ENCODE measurements at regions of chr9 and their contacts with region 1.

Region 1: DNA sequence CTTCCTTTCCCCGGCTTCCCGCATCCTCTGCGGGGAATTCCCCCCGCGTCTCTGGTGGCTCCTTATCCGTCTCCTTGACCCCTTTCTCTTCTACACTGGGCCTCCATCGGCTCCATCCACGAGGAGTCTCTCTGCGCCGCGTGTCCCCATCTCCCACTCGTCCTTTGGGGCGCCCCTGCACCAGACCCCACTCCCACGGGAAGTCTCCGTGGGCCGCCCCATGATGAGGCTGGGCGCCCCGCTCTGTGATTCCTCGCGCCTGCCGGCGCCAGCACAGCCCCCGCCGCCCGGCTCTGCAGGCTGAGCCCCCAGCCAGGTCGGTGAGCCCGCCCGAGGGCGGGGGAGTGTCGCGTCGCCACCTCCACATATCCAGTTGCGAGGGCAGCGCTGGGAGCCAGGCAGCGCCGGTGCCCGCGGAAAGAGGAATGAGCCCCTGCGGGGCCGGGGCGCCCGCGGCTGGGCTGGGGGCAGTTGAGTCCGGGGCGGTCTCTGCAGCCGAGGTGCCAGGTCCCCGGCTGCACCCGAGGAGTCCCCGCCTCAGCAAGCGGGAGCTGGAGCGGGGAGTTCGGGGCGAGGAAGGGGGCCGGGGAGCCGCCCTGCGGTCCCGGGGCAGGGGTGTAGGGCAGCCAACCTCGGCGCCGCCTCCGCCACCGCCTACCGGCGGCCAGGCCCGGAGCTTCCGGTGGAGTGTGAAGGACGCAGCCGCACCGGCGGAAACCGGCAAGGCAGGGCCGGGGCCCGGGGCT is 2.1 kb upstream of the TRAF1 start:
- DNase-seq: peak; percentile 83
- ATAC-seq: peak; percentile 21
- H3K4me3 Mint-ChIP-seq: peak overlapping the region; percentile 88
- H3K27ac Mint-ChIP-seq: peak overlapping the region; percentile 100
- H3K4me1 Mint-ChIP-seq: peaks cover 53% of the 10 kb centered on the region
- H3K27me3 Mint-ChIP-seq: no peaks in the 10 kb centered on the region
- CTCF ChIP-seq: no peak

Region 2: DNA sequence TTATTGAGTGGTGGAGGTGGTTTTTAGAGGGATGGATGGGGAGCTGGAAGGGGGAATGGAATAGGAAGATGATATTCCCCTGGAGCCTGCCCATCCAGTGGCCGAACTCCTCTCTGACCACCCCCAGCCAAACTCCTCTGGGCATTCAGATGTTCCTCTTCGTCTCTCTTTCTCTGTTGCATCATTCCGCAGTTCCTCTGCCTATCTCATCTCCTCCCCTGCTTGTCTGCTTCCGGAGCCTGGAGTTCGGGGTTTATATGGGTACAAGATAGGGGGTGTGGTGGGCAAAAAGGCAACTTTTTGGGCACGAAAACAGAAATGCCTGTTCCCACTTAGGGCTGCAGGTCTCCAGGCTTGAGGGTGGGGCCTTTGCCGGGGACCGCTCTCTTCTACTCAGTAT is 336.4 kb before region 1 on chr9:
- CTCF ChIA-PET with region 1: no interaction called
- POLR2A ChIA-PET with region 1: no interaction called
- intact Hi-C with region 1: no loop called
- DNase-seq: no peak
- ATAC-seq: no peak
- H3K4me3 Mint-ChIP-seq: no peak overlapping the region
- H3K27ac Mint-ChIP-seq: no peak overlapping the region
- H3K4me1 Mint-ChIP-seq: no peaks in the 10 kb centered on the region
- H3K27me3 Mint-ChIP-seq: no peaks in the 10 kb centered on the region
- CTCF ChIP-seq: no peak

Region 3: GRCh38 chr9:120792898-120793765 is 135.5 kb before region 1 on chr9 and contains the start of gene FBXW2:
- CTCF ChIA-PET with region 1: interaction called, 3 read pairs
- POLR2A ChIA-PET with region 1: interaction called, 13 read pairs
- intact Hi-C with region 1: no loop called
- DNase-seq: peak; percentile 91
- ATAC-seq: peak; percentile 94
- H3K4me3 Mint-ChIP-seq: peak within 1 kb of the TSS; percentile 99
- H3K27ac Mint-ChIP-seq: peak within 1 kb of the TSS; percentile 97
- H3K4me1 Mint-ChIP-seq: peaks cover 46% of the 10 kb centered on the region
- H3K27me3 Mint-ChIP-seq: no peaks in the 10 kb centered on the region
- CTCF ChIP-seq: no peak
- total RNA-seq, gene FBXW2: 68.8 to 68.9 TPM

Region 4: GRCh38 chr9:120842690-120843499 is 85.8 kb before region 1 on chr9 and contains the start of gene PSMD5:
- CTCF ChIA-PET with region 1: interaction called, 5 read pairs
- POLR2A ChIA-PET with region 1: interaction called, 49 read pairs
- intact Hi-C with region 1: loop called (anchors 5 kb)
- DNase-seq: peak; percentile 100
- ATAC-seq: peak; percentile 90
- H3K4me3 Mint-ChIP-seq: peak within 1 kb of the TSS; percentile 98
- H3K27ac Mint-ChIP-seq: peak within 1 kb of the TSS; percentile 95
- H3K4me1 Mint-ChIP-seq: peaks cover 71% of the 10 kb centered on the region
- H3K27me3 Mint-ChIP-seq: no peaks in the 10 kb centered on the region
- CTCF ChIP-seq: no peak
- total RNA-seq, gene PSMD5: 52.3 to 55.3 TPM

Region 5: DNA sequence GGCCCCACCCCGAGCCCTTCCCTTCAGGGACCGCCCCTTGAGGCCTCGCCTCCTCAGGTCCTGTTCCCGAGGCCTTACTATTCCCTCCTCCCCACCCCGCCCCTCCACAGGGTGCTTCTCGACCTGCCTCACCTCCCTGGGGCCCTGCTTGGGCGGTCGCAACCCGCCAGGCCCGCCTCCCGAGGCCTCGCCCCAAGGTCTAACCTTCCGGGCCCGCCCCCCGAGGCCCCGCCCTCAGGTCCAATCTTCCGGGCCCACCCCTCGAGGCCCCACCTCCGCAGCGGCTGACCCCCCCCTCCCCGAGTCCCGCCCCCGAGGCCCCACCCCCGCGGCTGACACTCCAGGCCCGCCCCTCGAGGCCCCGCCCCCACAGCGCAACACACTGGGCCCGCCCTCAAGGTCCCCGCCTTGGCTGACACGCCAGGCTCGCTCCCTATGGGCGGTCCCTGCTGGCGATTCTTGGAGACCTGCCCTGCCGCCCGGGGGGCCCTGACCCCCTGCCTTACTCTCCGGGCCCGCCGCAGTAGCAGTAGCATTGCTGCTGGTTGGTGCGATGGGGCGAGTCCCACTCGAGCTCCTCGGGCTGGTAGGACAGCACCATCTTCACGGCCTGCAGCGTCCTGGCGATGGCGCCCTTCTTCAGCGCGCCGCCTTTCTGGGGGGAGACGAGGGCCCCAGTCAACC is 59.8 kb before region 1 on chr9:
- CTCF ChIA-PET with region 1: interaction called, 10 read pairs
- POLR2A ChIA-PET with region 1: interaction called, 2,439 read pairs
- intact Hi-C with region 1: no loop called
- DNase-seq: peak; percentile 98
- ATAC-seq: peak; percentile 91
- H3K4me3 Mint-ChIP-seq: peak overlapping the region; percentile 81
- H3K27ac Mint-ChIP-seq: peak overlapping the region; percentile 97
- H3K4me1 Mint-ChIP-seq: peaks cover 47% of the 10 kb centered on the region
- H3K27me3 Mint-ChIP-seq: no peaks in the 10 kb centered on the region
- CTCF ChIP-seq: peak; percentile 51

Region 6: GRCh38 chr9:120875954-120876841 is 52.5 kb before region 1 on chr9:
- CTCF ChIA-PET with region 1: interaction called, 7 read pairs
- POLR2A ChIA-PET with region 1: interaction called, 2,439 read pairs
- intact Hi-C with region 1: loop called (anchors 5 kb)
- DNase-seq: peak; percentile 96
- ATAC-seq: peak; percentile 62
- H3K4me3 Mint-ChIP-seq: peak overlapping the region; percentile 91
- H3K27ac Mint-ChIP-seq: peak overlapping the region; percentile 93
- H3K4me1 Mint-ChIP-seq: peaks cover 75% of the 10 kb centered on the region
- H3K27me3 Mint-ChIP-seq: no peaks in the 10 kb centered on the region
- CTCF ChIP-seq: no peak

Region 7: DNA sequence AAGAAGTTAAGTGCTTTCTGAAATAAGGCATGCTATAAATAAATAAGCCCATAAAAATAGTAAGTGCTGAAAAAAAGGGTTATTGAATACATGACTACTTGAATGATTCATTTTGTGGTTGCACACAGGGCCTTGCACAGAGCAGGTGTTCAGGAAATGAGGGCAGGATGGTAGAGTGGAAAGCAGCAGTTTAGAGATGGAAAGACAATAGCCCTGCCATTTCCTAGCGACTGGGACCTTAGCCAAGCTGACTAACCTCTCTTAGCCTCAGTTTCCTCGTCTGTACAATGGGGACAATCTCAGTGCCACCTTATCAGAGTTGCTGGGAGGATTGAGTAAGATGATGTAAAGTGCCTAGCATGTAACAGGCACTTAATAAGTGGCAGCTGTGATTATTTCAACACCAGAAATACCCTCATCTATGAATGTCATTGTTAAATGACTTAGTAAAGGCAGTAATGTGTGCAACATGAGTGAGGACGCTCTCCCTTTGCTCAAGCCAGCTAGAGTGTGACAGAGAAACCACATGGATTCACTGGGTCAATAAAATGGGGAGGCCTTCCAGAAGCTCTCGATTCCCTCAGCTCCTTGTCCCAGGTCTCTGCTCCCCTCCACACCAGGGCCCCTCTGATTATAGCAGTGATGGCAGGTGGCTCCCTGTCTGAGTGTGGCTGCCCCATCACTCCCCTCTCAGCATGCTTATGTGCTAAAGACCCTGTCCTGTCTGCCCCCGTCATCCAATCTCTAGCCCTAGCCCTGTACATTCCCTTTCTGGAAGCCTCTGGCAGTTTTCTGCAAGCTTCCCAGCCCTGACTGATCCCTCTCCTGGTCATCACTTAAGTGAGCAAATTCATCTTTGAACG is 35.7 kb before region 1 on chr9:
- CTCF ChIA-PET with region 1: interaction called, 9 read pairs
- POLR2A ChIA-PET with region 1: interaction called, 2,439 read pairs
- intact Hi-C with region 1: loop called (anchors 5 kb)
- DNase-seq: peak; percentile 83
- ATAC-seq: peak; percentile 38
- H3K4me3 Mint-ChIP-seq: peak overlapping the region; percentile 79
- H3K27ac Mint-ChIP-seq: peak overlapping the region; percentile 98
- H3K4me1 Mint-ChIP-seq: peaks cover 84% of the 10 kb centered on the region
- H3K27me3 Mint-ChIP-seq: no peaks in the 10 kb centered on the region
- CTCF ChIP-seq: no peak

Region 8: GRCh38 chr9:120909904-120910303 is 18.8 kb before region 1 on chr9:
- CTCF ChIA-PET with region 1: interaction called, 13 read pairs
- POLR2A ChIA-PET with region 1: interaction called, 2,439 read pairs
- intact Hi-C with region 1: no loop called
- DNase-seq: peak; percentile 81
- ATAC-seq: peak; percentile 64
- H3K4me3 Mint-ChIP-seq: no peak overlapping the region
- H3K27ac Mint-ChIP-seq: peak overlapping the region; percentile 92
- H3K4me1 Mint-ChIP-seq: peaks cover 91% of the 10 kb centered on the region
- H3K27me3 Mint-ChIP-seq: no peaks in the 10 kb centered on the region
- CTCF ChIP-seq: no peak

Region 9: GRCh38 chr9:120956862-120957261 is 28.2 kb after region 1 on chr9:
- CTCF ChIA-PET with region 1: no interaction called
- POLR2A ChIA-PET with region 1: no interaction called
- intact Hi-C with region 1: no loop called
- DNase-seq: no peak
- ATAC-seq: no peak
- H3K4me3 Mint-ChIP-seq: no peak overlapping the region
- H3K27ac Mint-ChIP-seq: no peak overlapping the region
- H3K4me1 Mint-ChIP-seq: no peaks in the 10 kb centered on the region
- H3K27me3 Mint-ChIP-seq: no peaks in the 10 kb centered on the region
- CTCF ChIP-seq: no peak

Measured in activated CD8-positive, alpha-beta T cell treated with anti-CD3 and anti-CD28 coated beads for 36 hours (primary cell).